ENCODE measurements at regions of chr12 and their contacts with region 1.

Region 1: DNA sequence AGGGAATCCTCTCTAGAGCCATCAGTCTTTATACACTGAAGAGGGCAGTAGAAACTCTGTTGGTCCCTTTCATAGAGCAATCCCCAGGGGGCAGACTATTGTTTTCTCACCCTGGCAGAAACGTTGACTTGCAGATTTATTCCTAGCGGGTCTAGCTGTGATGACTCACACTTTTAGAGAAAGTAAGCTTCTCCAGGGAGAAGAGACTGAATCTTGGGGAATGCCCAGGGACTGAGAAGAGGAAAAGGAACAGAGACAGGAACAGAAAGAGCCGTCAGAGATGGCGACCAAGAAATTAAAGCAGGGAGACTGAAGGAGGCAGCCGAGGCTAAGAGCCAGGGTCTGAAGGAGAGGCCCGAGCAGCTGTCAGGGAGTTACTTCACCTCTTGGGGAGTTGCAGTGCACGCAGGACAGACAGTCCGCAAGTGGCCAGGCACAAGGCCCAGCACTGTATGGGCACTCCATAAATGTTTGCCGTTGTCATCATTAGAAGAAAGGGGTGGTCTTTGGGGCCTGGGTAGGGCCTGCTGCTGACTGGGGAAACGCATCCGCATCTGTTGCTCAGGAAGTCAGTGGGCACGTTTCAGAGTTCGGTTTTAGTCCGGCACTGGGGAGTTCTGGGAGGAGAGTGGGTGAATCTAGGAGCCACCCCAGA is 13.0 kb downstream of the PLEKHG6 start:
- DNase-seq: peak; percentile 95
- H3K4me3 ChIP-seq: no peak overlapping the region
- CTCF ChIP-seq: peak; percentile 59

Region 2: GRCh38 chr12:6182116-6182898 is 141.2 kb before region 1 on chr12:
- in situ Hi-C with region 1: no loop called
- DNase-seq: peak; percentile 79
- H3K4me3 ChIP-seq: no peak overlapping the region
- CTCF ChIP-seq: no peak

Region 3: GRCh38 chr12:6470375-6471163 is 147.1 kb after region 1 on chr12 and contains the start of gene VAMP1:
- in situ Hi-C with region 1: loop called (anchors 25 kb)
- DNase-seq: peak; percentile 97
- H3K4me3 ChIP-seq: peak within 1 kb of the TSS; percentile 64
- CTCF ChIP-seq: no peak